ENCODE measurements at regions of chr10 and their contacts with region 1.

Region 1: DNA sequence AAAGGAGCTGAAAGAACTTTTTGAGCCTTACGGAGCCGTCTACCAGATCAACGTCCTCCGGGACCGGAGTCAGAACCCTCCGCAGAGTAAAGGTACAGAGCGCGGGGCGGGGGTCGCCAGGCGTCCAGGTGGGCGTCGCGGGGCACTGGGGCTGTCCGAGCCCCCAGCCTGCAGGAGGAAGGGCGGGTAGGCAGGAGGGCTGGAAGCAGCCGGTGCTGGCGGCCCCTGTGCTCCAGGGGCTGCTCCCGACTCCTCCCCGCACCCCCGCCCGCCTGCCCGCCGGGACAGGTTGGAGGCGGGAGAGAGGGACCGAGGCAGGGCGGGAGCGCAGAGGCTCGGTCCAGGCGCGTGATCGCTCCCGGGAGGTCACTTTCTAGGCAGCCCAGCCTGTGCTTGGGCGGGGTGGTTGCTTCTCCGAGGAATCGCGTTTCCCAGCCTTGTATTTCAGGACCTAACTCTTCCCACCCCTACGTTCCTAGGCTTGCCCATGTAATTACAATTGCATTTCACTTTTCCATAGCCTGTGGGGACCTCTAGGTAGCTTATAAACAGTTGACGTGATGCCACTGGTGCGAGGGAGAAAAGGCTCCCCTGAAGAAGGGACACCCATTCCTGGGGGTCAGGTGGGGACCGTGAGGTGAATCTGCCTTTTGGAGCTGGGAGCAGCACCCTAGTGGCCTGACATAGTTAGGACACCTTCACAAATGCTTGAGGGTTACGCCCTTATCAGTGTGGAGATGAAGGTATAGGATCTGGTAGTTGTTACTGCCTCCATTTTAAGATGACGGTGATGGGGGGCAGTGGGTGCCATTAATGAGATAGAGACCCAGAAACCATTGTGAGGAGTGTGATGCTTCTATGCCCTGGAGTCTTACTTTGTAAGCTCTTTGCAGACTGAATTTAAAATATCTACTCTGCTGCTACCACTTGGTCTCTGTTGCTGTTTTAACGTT is 148.2 kb downstream of the CELF2 start:
- DNase-seq: peak; percentile 84
- H3K4me3 Mint-ChIP-seq: no peak overlapping the region
- H3K27ac Mint-ChIP-seq: no peak overlapping the region
- H3K4me1 Mint-ChIP-seq: peaks cover 25% of the 10 kb centered on the region
- H3K27me3 Mint-ChIP-seq: no peaks in the 10 kb centered on the region

Region 2: DNA sequence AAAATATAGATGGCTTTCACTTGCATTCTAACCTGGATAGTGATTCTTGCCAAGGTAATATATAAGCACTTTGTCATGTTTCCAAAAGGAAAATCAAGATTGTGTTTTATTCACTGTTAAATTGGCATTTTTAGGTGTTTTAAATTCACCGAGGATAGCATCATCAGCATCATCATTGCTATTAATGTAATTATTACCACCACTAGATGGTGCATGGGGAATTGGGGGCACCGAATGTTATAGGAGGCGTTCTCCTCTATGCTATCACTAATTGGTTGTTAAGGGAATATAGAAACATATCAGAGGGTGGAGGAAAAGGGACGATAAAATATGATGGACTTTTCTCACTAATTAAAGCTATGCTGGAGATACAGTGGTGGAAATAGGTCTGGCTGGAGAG is 52.7 kb before region 1 on chr10:
- CTCF ChIA-PET with region 1: interaction called, 19 read pairs
- DNase-seq: peak; percentile 38
- H3K4me3 Mint-ChIP-seq: no peak overlapping the region
- H3K27ac Mint-ChIP-seq: no peak overlapping the region
- H3K4me1 Mint-ChIP-seq: peaks cover 27% of the 10 kb centered on the region
- H3K27me3 Mint-ChIP-seq: no peaks in the 10 kb centered on the region

Region 3: DNA sequence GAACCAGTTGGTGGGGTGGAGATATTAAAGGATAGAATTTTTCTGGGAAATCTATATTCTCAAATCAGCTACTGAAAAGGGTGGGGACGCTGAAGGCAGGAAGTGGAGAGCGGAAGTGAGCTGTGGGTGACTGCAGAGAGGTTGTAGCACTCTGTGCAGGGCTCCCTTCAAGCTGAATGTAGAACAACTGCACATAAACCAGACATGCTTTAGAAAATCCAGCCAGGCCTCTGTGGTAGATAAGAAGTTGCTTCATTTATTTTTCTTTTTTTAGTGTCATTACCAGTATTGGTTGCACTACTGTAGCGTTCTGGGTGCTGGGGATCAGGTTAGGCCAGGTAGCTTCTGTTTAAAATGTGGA is 20.4 kb before region 1 on chr10:
- CTCF ChIA-PET with region 1: interaction called, 75 read pairs
- DNase-seq: peak; percentile 84
- H3K4me3 Mint-ChIP-seq: peak overlapping the region; percentile 68
- H3K27ac Mint-ChIP-seq: peak overlapping the region; percentile 96
- H3K4me1 Mint-ChIP-seq: peaks cover 100% of the 10 kb centered on the region
- H3K27me3 Mint-ChIP-seq: no peaks in the 10 kb centered on the region

Region 4: DNA sequence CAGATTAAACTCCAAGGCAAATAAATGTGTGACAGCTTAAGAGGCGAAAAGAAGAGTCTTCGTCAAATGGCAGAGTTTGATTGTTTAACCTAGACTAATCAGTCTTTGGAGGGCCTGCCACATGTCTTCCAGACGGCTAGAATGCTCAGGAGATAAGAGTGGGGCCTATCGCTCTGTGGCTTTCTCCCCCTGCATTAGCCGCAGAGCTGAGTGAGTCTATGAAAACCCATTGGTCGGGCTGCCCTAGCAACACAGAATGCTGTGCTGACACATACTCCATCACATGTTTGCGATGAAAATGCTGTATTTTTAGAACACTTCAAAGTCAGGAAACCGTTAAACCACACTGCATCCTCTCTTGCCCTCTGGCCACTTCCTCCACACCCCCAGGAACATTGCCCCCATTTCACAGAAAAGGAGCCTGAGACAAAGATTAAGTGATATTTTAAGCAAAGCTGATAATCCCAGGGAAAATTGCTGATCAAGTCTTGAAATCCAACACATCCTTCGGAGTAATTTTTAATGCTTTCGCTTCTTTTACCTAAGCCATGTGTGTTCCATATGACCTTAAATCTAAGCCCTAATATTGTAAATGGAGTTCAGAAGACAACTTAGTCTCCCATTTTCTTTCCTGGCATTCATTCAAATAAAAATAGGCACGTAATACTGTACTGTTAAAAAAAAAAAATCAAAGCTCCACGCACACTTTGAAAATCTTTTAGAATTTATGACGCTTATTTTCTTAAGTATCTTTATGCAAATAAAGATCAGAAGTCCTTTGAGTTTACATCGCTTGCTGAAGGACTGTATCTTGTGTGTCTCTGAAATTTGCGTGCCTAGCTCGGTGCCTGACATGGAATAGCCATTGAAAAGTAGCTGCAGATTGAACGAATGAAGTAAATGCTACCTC is 13.0 kb after region 1 on chr10:
- CTCF ChIA-PET with region 1: interaction called, 63 read pairs
- DNase-seq: peak; percentile 91
- H3K4me3 Mint-ChIP-seq: no peak overlapping the region
- H3K27ac Mint-ChIP-seq: peak overlapping the region; percentile 92
- H3K4me1 Mint-ChIP-seq: peaks cover 99% of the 10 kb centered on the region
- H3K27me3 Mint-ChIP-seq: no peaks in the 10 kb centered on the region

Region 5: GRCh38 chr10:11225935-11226334 is 60.1 kb after region 1 on chr10:
- CTCF ChIA-PET with region 1: interaction called, 16 read pairs
- DNase-seq: peak; percentile 71
- H3K4me3 Mint-ChIP-seq: peak overlapping the region; percentile 22
- H3K27ac Mint-ChIP-seq: peak overlapping the region; percentile 90
- H3K4me1 Mint-ChIP-seq: peaks cover 92% of the 10 kb centered on the region
- H3K27me3 Mint-ChIP-seq: no peaks in the 10 kb centered on the region